ENCODE measurements at regions of chr22 and their contacts with region 1.

Region 1: DNA sequence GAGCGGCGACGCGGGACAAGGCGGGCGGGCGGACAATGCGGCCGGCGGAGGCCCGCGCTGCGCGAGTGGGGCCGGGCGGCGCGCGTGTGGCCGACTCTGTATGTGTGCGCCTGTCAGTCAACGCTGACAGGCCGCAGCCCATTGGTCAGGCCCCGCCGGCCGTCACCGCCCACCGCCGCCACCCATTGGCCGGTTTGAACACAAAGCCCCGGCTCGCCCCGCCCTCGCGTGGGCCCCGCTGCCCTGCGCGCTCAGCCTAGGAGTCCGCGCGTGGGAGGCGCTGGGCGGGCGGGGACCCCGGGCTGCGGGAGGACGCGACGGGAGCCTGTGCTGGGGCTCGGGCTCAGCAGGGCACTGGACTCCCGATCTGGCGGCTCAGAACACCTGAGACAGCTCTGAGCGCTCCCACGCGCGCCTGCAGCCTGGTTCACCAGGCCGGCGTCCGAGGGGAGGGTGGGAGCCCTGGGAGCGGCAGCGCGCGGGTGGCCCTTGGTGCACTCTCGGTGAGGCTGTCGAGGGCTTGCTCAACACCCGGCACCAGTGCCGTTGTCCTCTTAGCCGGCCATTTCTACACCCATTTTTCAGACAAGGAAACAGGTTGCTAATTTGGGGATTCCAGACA is at the start of gene SUN2:
- DNase-seq: peak; percentile 89 to 98 (median 92)
- ATAC-seq: peak; percentile 85
- H3K4me3 ChIP-seq: peak within 1 kb of the TSS; percentile 95
- H3K4me3 Mint-ChIP-seq: peak within 1 kb of the TSS; percentile 95 to 99 (median 96)
- H3K27ac ChIP-seq: peak within 1 kb of the TSS; percentile 81
- H3K27ac Mint-ChIP-seq: peak within 1 kb of the TSS; percentile 89 to 100 (median 99)
- H3K4me1 ChIP-seq: peaks cover 48 to 54% of the 10 kb centered on the region in 2 donors
- H3K4me1 Mint-ChIP-seq: peaks cover 42 to 67% (median 62%) of the 10 kb centered on the region in 7 donors
- H3K27me3 ChIP-seq: no peaks in the 10 kb centered on the region
- H3K27me3 Mint-ChIP-seq: no peaks in the 10 kb centered on the region
- total RNA-seq, gene SUN2: 509 to 977 (median 558) TPM

Region 2: DNA sequence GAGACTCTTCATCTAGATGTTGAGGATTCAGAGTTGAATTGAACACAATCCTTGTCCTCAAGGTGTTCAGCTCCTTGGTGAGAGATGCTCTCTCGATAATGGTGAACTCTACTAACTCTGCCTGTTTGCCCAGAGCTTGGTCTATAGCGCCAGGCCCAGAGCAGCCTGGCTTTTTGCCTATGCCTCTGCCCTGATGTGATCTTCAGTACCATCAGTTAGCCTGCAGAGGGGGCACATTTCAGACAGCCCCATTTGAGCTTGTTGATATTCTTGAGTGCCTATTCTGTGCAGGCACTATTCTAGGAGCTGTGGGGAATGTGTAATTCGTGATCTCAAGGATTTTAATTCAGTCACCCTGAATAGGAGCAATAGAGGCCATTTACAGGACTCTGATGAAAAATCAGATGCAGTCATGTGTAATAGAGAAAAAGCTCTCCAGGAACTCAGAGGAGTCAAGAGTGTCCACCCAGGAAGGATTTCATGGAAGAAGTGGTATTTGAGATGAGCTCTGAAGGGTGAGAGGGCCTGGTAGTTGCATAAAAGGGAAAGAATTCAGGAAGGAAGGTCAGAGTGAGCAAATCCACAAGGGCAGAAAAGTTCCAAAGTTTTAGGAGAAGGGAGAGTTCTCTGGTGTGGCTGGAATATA is 31.0 kb before region 1 on chr22:
- CTCF ChIA-PET with region 1: interaction called, 11 read pairs
- POLR2A ChIA-PET with region 1: interaction called, 1,007 read pairs
- intact Hi-C with region 1: no loop called
- DNase-seq: peak in 7 of 9 donors; percentile 33 to 63 (median 50)
- ATAC-seq: peak; percentile 86
- H3K4me3 ChIP-seq: no peak overlapping the region
- H3K4me3 Mint-ChIP-seq: peak overlapping the region in 1 of 10 donors; percentile 15
- H3K27ac ChIP-seq: peak overlapping the region; percentile 8
- H3K27ac Mint-ChIP-seq: peak overlapping the region in 8 of 9 donors; percentile 50 to 91 (median 76)
- H3K4me1 ChIP-seq: no peaks in the 10 kb centered on the region
- H3K4me1 Mint-ChIP-seq: peaks cover 5 to 25% (median 11%) of the 10 kb centered on the region in 7 donors
- H3K27me3 ChIP-seq: no peaks in the 10 kb centered on the region
- H3K27me3 Mint-ChIP-seq: no peaks in the 10 kb centered on the region

Region 3: GRCh38 chr22:38744981-38745380 is 11.0 kb before region 1 on chr22:
- CTCF ChIA-PET with region 1: interaction called, 5 read pairs
- POLR2A ChIA-PET with region 1: interaction called, 1,007 read pairs
- intact Hi-C with region 1: loop called in 1 of 2 experiments (anchors 2 kb)
- DNase-seq: no peak
- ATAC-seq: no peak
- H3K4me3 ChIP-seq: no peak overlapping the region
- H3K4me3 Mint-ChIP-seq: no peak overlapping the region
- H3K27ac ChIP-seq: peak overlapping the region; percentile 46
- H3K27ac Mint-ChIP-seq: peak overlapping the region in 8 of 9 donors; percentile 21 to 81 (median 58)
- H3K4me1 ChIP-seq: peaks cover 29 to 37% of the 10 kb centered on the region in 2 donors
- H3K4me1 Mint-ChIP-seq: peaks cover 13 to 59% (median 32%) of the 10 kb centered on the region in 7 donors
- H3K27me3 ChIP-seq: no peaks in the 10 kb centered on the region
- H3K27me3 Mint-ChIP-seq: no peaks in the 10 kb centered on the region

Region 4: GRCh38 chr22:38793721-38794466 is 37.9 kb after region 1 on chr22 and contains the start of gene DNAL4:
- CTCF ChIA-PET with region 1: interaction called, 3 read pairs
- POLR2A ChIA-PET with region 1: interaction called, 7 read pairs
- intact Hi-C with region 1: loop called (anchors 1 kb)
- DNase-seq: peak; percentile 64 to 95 (median 93)
- ATAC-seq: peak; percentile 99
- H3K4me3 ChIP-seq: peak within 1 kb of the TSS; percentile 75
- H3K4me3 Mint-ChIP-seq: peak within 1 kb of the TSS; percentile 86 to 97 (median 92)
- H3K27ac ChIP-seq: peak within 1 kb of the TSS; percentile 89
- H3K27ac Mint-ChIP-seq: peak within 1 kb of the TSS; percentile 78 to 96 (median 91)
- H3K4me1 ChIP-seq: peaks cover 13 to 26% of the 10 kb centered on the region in 2 donors
- H3K4me1 Mint-ChIP-seq: peaks cover 20 to 44% (median 34%) of the 10 kb centered on the region in 7 donors
- H3K27me3 ChIP-seq: no peaks in the 10 kb centered on the region
- H3K27me3 Mint-ChIP-seq: peaks cover 0 to 27% (median 0%) of the 10 kb centered on the region in 5 donors
- total RNA-seq, gene DNAL4: 5.0 to 11.1 (median 8.9) TPM

Region 5: GRCh38 chr22:39152511-39153219 is 396.6 kb after region 1 on chr22 and contains the start of gene CBX7:
- CTCF ChIA-PET with region 1: no interaction called
- POLR2A ChIA-PET with region 1: no interaction called
- intact Hi-C with region 1: loop called in 1 of 2 experiments (anchors 1 kb)
- DNase-seq: peak; percentile 91 to 98 (median 94)
- ATAC-seq: peak; percentile 93
- H3K4me3 ChIP-seq: peak within 1 kb of the TSS; percentile 95
- H3K4me3 Mint-ChIP-seq: peak within 1 kb of the TSS; percentile 83 to 99 (median 92)
- H3K27ac ChIP-seq: peak within 1 kb of the TSS; percentile 89
- H3K27ac Mint-ChIP-seq: peak within 1 kb of the TSS; percentile 87 to 96 (median 91)
- H3K4me1 ChIP-seq: peaks cover 31 to 46% of the 10 kb centered on the region in 2 donors
- H3K4me1 Mint-ChIP-seq: peaks cover 7 to 41% (median 35%) of the 10 kb centered on the region in 7 donors
- H3K27me3 ChIP-seq: no peaks in the 10 kb centered on the region
- H3K27me3 Mint-ChIP-seq: peaks cover 0 to 41% (median 0%) of the 10 kb centered on the region in 5 donors
- total RNA-seq, gene CBX7: 14.2 to 164 (median 76.9) TPM

Measured in naive thymus-derived CD4-positive, alpha-beta T cell (primary cell).